Tibial artery (tissue), 4 donors: ENCODE measurements at regions of chr2 and their contacts with region 1.

Region 1: GRCh38 chr2:213238753-213239495 is 45.3 kb upstream of the SPAG16 start:
- DNase-seq: peak in 1 of 2 donors; percentile 34
- H3K4me3 ChIP-seq: peak overlapping the region; percentile 11 to 23
- H3K27ac ChIP-seq: peak overlapping the region; percentile 63 to 69
- H3K4me1 ChIP-seq: peaks cover 0 to 41% (median 7%) of the 10 kb centered on the region in 4 donors
- H3K27me3 ChIP-seq: no peaks in the 10 kb centered on the region
- CTCF ChIP-seq: no peak

Region 2: GRCh38 chr2:214809751-214810564 is 1571.0 kb after region 1 on chr2:
- intact Hi-C with region 1: loop called (anchors 5 kb)
- DNase-seq: peak; percentile 98 to 100
- H3K4me3 ChIP-seq: peak overlapping the region; percentile 85 to 95
- H3K27ac ChIP-seq: peak overlapping the region; percentile 84
- H3K4me1 ChIP-seq: peaks cover 0 to 25% (median 14%) of the 10 kb centered on the region in 4 donors
- H3K27me3 ChIP-seq: no peaks in the 10 kb centered on the region
- CTCF ChIP-seq: no peak